ENCODE measurements at regions of chr20 and their contacts with region 1.

Region 1: DNA sequence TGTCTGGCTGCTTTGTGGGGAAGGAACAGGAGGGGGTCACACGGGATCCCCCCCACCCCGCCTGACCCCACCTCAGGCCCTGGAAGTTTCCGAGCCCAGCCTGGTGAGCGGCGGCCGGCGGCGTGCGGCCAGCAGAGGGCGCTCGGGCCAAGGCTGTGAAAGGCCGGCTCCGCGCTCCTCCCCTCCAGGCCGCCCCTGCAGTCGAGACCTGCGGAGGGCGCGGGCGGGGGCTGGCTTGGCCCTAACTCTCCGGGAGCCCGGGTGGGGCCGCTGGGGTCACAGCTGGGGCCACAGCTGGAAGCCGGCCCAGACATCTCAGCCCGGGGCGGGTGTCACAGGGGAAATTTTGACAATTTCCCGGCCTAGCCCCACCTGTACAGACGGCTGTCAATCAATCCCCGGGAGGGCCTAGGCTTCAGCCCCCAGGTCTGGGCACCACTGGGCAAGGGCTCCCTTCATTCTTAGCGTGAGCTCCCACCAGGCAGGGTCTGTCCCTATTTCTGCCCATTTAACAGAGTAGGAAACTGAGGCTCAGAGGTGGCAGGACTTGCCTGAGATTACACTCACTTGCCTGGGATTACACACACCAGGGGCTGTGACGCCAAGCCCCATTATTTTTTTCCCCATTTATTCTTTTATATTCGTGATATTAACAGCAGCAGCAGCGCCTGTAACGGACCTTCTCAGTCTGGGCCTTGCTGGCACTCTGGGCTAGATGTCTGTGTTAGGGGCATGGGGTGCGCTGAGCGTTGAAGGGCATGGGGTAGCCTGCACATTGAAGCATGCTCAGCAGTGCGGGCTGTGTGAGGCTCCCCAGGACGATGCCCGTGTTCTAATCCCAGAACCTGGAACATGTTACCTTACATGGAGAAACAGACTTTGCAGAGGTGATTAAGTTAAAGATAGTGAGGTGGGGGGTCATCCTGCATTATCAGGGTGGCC is 23.0 kb downstream of the ZBP1 start:
- DNase-seq: peak; percentile 47 to 65 (median 58)
- H3K4me3 ChIP-seq: no peak overlapping the region
- H3K4me3 Mint-ChIP-seq: peak overlapping the region in 1 of 2 donors; percentile 49
- H3K27ac ChIP-seq: no peak overlapping the region
- H3K27ac Mint-ChIP-seq: no peak overlapping the region
- H3K4me1 ChIP-seq: peaks cover 5 to 8% of the 10 kb centered on the region in 2 donors
- H3K4me1 Mint-ChIP-seq: peaks cover 2% of the 10 kb centered on the region
- H3K27me3 ChIP-seq: peaks cover 0 to 4% of the 10 kb centered on the region in 2 donors
- H3K27me3 Mint-ChIP-seq: peaks cover 14 to 32% (median 27%) of the 10 kb centered on the region in 3 donors
- CTCF ChIP-seq: peak; percentile 99

Region 2: GRCh38 chr20:57346477-57346876 is 250.8 kb before region 1 on chr20:
- intact Hi-C with region 1: loop called in 1 of 2 experiments (anchors 5 kb)
- DNase-seq: peak; percentile 27 to 59 (median 50)
- H3K4me3 ChIP-seq: no peak overlapping the region
- H3K4me3 Mint-ChIP-seq: no peak overlapping the region
- H3K27ac ChIP-seq: no peak overlapping the region
- H3K27ac Mint-ChIP-seq: no peak overlapping the region
- H3K4me1 ChIP-seq: peaks cover under 1 to 3% of the 10 kb centered on the region in 2 donors
- H3K4me1 Mint-ChIP-seq: peaks cover 1% of the 10 kb centered on the region
- H3K27me3 ChIP-seq: peaks cover 18 to 25% of the 10 kb centered on the region in 2 donors
- H3K27me3 Mint-ChIP-seq: peaks cover 15 to 38% (median 23%) of the 10 kb centered on the region in 3 donors
- CTCF ChIP-seq: peak; percentile 81

Region 3: DNA sequence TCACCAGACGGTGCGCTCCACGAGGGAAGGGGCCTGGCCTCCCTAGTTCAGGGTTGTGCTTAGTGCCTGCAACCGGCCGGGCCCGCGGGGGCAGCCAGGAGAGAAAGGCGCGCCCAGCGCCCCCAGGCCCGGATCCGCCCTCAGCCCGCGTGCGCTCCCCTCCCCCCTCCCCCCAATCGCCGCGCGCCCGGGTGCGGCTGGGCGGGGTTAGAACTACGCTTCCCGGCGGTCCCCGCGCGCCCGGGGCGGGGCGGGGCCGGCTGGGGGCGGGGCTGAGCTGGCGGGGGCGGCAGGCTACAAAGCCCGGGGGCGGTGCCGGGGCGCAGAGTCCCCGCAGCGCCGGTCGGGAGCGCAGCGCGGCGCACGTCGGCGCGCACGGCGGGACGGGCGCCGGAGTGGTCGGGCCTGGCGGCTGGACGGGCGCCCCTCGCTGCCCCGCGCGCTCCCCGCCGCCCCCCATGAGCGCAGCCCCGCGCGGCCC is 206.2 kb before region 1 on chr20 and contains the start of gene RBM38:
- intact Hi-C with region 1: loop called in 1 of 2 experiments (anchors 10 kb)
- DNase-seq: peak; percentile 37 to 62 (median 62)
- H3K4me3 ChIP-seq: peak within 1 kb of the TSS; percentile 67 to 84 (median 68)
- H3K4me3 Mint-ChIP-seq: peak within 1 kb of the TSS; percentile 90 to 93
- H3K27ac ChIP-seq: peak within 1 kb of the TSS; percentile 51 to 67
- H3K27ac Mint-ChIP-seq: peak within 1 kb of the TSS; percentile 34 to 92 (median 75)
- H3K4me1 ChIP-seq: peaks cover 45 to 55% of the 10 kb centered on the region in 2 donors
- H3K4me1 Mint-ChIP-seq: peaks cover 55% of the 10 kb centered on the region
- H3K27me3 ChIP-seq: no peaks in the 10 kb centered on the region
- H3K27me3 Mint-ChIP-seq: peaks cover 2 to 12% (median 3%) of the 10 kb centered on the region in 3 donors
- CTCF ChIP-seq: no peak
- polyA plus RNA-seq, gene RBM38: 7.5 to 48.3 (median 17.8) TPM

Region 4: DNA sequence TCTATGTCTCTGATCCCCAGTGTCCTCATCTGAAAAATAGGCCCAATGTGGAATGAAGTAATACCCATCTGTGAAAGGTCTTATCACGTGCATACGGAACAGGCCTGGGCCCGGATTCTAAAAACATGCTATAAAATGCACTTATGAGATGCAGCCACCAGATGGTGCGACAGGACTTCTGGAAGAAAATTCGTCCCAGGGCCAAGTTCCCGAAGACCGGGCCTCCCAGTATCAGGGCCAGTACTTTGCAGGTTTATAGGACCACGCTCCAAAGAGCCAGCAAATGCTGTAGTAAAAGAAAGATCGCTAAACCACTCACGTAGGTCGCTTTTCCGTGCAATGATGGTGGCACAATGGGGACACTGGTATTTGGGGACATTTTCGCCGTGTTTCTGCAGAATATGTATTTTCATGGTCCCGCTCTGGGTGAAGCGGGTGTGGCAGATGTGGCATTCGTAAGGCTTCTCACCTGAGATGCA is 83.0 kb before region 1 on chr20:
- intact Hi-C with region 1: loop called (anchors 1 kb)
- DNase-seq: peak; percentile 56 to 73 (median 70)
- H3K4me3 ChIP-seq: no peak overlapping the region
- H3K4me3 Mint-ChIP-seq: peak overlapping the region in 1 of 2 donors; percentile 57
- H3K27ac ChIP-seq: no peak overlapping the region
- H3K27ac Mint-ChIP-seq: no peak overlapping the region
- H3K4me1 ChIP-seq: no peaks in the 10 kb centered on the region
- H3K4me1 Mint-ChIP-seq: peaks cover 4% of the 10 kb centered on the region
- H3K27me3 ChIP-seq: peaks cover 12 to 39% of the 10 kb centered on the region in 2 donors
- H3K27me3 Mint-ChIP-seq: peaks cover 38 to 43% (median 42%) of the 10 kb centered on the region in 3 donors
- CTCF ChIP-seq: peak; percentile 85

Region 5: GRCh38 chr20:57654363-57654997 is 57.2 kb after region 1 on chr20:
- intact Hi-C with region 1: loop called in 1 of 2 experiments (anchors 5 kb)
- DNase-seq: peak; percentile 21 to 45 (median 41)
- H3K4me3 ChIP-seq: no peak overlapping the region
- H3K4me3 Mint-ChIP-seq: no peak overlapping the region
- H3K27ac ChIP-seq: no peak overlapping the region
- H3K27ac Mint-ChIP-seq: no peak overlapping the region
- H3K4me1 ChIP-seq: no peaks in the 10 kb centered on the region
- H3K4me1 Mint-ChIP-seq: peaks cover 3% of the 10 kb centered on the region
- H3K27me3 ChIP-seq: no peaks in the 10 kb centered on the region
- H3K27me3 Mint-ChIP-seq: peaks cover 4 to 8% (median 8%) of the 10 kb centered on the region in 3 donors
- CTCF ChIP-seq: peak; percentile 92

Region 6: GRCh38 chr20:57718490-57719271 is 121.4 kb after region 1 on chr20:
- intact Hi-C with region 1: no loop called
- DNase-seq: peak; percentile 89 to 94 (median 91)
- H3K4me3 ChIP-seq: peak overlapping the region in 1 of 3 experiments; percentile 34
- H3K4me3 Mint-ChIP-seq: peak overlapping the region; percentile 55 to 73
- H3K27ac ChIP-seq: no peak overlapping the region
- H3K27ac Mint-ChIP-seq: no peak overlapping the region
- H3K4me1 ChIP-seq: peaks cover 9 to 10% of the 10 kb centered on the region in 2 donors
- H3K4me1 Mint-ChIP-seq: peaks cover 5% of the 10 kb centered on the region
- H3K27me3 ChIP-seq: no peaks in the 10 kb centered on the region
- H3K27me3 Mint-ChIP-seq: peaks cover 9 to 34% (median 16%) of the 10 kb centered on the region in 3 donors
- CTCF ChIP-seq: no peak

Region 7: DNA sequence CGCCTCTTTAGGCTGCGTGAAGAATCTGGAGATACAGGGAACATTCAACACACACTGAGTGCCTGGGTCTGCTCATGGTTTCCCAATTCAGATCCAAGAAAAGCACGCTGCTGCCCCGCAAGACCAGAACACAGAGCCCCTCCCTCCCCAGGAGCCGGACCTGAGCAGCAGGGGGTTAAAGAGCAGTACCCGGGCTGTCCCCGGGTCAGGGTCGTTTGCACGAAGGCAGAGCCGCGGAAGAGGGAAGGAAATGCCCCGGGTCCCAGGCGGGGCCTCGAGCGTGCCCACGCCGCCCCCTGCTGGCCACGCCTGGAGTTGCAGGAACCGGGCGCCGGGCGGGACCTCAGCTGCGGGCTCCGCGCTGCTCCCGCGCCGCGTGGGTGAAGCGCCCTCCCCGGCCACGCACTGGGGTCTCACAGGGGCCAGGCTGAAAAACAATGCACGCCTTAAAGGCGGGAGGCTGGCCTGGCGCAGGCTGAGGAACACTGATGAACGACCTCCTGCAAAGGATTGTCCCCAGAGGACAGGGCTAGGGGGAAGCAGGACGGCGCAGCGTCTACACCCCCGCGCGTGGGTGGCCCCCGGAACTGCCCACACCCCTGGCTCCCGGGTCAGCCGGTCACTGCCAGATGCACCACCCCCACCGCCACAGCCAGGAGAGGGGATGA is 582.3 kb after region 1 on chr20:
- intact Hi-C with region 1: loop called in 1 of 2 experiments (anchors 1 kb)
- DNase-seq: peak; percentile 32 to 55 (median 38)
- H3K4me3 ChIP-seq: peak overlapping the region in 1 of 3 experiments; percentile 56
- H3K4me3 Mint-ChIP-seq: peak overlapping the region; percentile 63 to 84
- H3K27ac ChIP-seq: no peak overlapping the region
- H3K27ac Mint-ChIP-seq: no peak overlapping the region
- H3K4me1 ChIP-seq: peaks cover 11% of the 10 kb centered on the region in 2 donors
- H3K4me1 Mint-ChIP-seq: peaks cover 9% of the 10 kb centered on the region
- H3K27me3 ChIP-seq: peaks cover 0 to 21% of the 10 kb centered on the region in 2 donors
- H3K27me3 Mint-ChIP-seq: peaks cover 20 to 33% (median 23%) of the 10 kb centered on the region in 3 donors
- CTCF ChIP-seq: peak; percentile 99

Region 8: DNA sequence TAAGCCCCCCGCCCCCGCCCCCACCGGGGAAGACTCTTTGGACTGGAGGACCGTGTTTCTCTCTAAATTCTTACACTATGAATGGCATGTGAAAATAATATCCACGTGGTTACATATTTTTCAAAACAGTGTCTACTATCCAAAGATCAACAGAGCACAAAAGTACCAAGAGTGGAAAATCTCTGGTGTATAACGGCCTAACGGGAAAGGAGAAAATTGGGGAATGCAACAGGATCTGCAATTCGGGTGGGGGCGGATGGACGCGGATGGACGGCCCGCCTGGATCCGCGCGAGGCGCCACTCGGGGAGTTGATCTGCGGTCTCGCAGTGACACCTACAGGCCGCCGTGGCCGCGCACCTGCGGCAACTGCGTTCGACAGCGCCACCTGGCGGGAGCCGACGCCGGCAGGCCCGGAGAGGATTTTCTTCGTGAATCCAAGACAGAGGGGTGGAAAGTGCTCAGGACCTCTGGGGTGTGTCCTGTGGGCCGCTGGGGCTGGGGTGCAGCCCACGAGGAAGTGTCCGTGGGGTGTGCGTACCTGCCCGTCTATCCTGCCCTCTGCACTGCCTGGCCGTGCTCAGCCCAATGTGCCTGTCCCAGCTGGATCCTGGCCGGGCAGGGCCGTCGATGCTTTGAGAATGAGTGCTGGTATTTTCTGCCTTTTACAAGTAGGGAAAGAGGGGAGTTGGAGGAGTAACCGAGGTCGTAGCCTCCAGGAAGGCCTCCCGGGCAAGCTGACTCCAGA is 612.6 kb after region 1 on chr20:
- intact Hi-C with region 1: loop called (anchors 1 to 2 kb)
- DNase-seq: peak; percentile 69 to 78 (median 71)
- H3K4me3 ChIP-seq: no peak overlapping the region
- H3K4me3 Mint-ChIP-seq: peak overlapping the region in 1 of 2 donors; percentile 46
- H3K27ac ChIP-seq: no peak overlapping the region
- H3K27ac Mint-ChIP-seq: peak overlapping the region in 1 of 7 donors; percentile 6
- H3K4me1 ChIP-seq: no peaks in the 10 kb centered on the region
- H3K4me1 Mint-ChIP-seq: peaks cover 9% of the 10 kb centered on the region
- H3K27me3 ChIP-seq: no peaks in the 10 kb centered on the region
- H3K27me3 Mint-ChIP-seq: peaks cover 16 to 18% (median 16%) of the 10 kb centered on the region in 3 donors
- CTCF ChIP-seq: peak; percentile 100